BJ (cell line): ENCODE measurements at regions of chr12 and their contacts with region 1.

Region 1: GRCh38 chr12:12736759-12737676 is 19.9 kb downstream of the CDKN1B start:
- DNase-seq: peak; percentile 59
- H3K4me3 ChIP-seq: peak overlapping the region; percentile 7; the same call in 1 of the 2 replicates
- H3K27me3 ChIP-seq: no peaks in the 10 kb centered on the region
- CTCF ChIP-seq: peak; percentile 56

Region 2: GRCh38 chr12:12714276-12715021 is 22.6 kb before region 1 on chr12:
- CTCF ChIA-PET with region 1: interaction called, 16 read pairs
- POLR2A ChIA-PET with region 1: no interaction called
- DNase-seq: no peak
- H3K4me3 ChIP-seq: peak overlapping the region; percentile 10
- H3K27me3 ChIP-seq: no peaks in the 10 kb centered on the region
- CTCF ChIP-seq: peak; percentile 43

Region 3: GRCh38 chr12:12724661-12725545 is 12.1 kb before region 1 on chr12:
- CTCF ChIA-PET with region 1: interaction called, 10 read pairs
- POLR2A ChIA-PET with region 1: interaction called, 24 read pairs
- DNase-seq: peak; percentile 99
- H3K4me3 ChIP-seq: peak overlapping the region; percentile 89
- H3K27me3 ChIP-seq: no peaks in the 10 kb centered on the region
- CTCF ChIP-seq: no peak; the same call in 1 of the 2 replicates